GM12878 (cell line): ENCODE measurements at regions of chr10 and their contacts with region 1.

Region 1: DNA sequence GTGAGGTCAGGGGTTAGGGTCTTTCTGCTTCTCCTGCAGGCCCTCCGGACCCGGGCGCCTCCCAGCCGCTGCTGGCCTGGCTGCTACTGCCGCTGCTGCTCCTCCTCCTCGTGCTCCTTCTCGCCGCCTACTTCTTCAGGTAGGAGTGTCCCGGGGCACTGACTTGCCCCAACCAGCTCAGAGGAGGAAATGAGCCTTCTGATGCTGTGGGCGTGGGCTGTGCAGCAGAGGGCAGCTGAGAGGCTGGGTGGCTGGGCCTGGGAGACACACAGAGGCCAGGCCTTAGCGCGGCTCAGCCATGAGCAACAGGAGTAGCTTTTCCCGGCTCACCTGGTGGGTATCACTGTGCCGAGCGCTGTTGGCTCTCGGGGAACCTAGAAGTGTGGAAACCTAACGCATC is 78.9 kb downstream of the MKI67 start:
- DNase-seq: peak; percentile 63
- ATAC-seq: peak; percentile 99
- H3K4me3 ChIP-seq: peak overlapping the region; percentile 70
- H3K27ac ChIP-seq: peak overlapping the region; percentile 54
- H3K4me1 ChIP-seq: peaks cover 30% of the 10 kb centered on the region
- H3K27me3 ChIP-seq: no peaks in the 10 kb centered on the region
- CTCF ChIP-seq: no peak
- EP300 ChIP-seq: no peak
- POLR2A ChIP-seq: peak; percentile 89
- RAD21 ChIP-seq: no peak

Region 2: GRCh38 chr10:127614484-127615017 is 432.8 kb before region 1 on chr10:
- CTCF ChIA-PET with region 1: no interaction called
- POLR2A ChIA-PET with region 1: no interaction called
- RAD21 ChIA-PET with region 1: no interaction called
- SMC1A ChIA-PET with region 1: no interaction called
- in situ Hi-C with region 1: no loop called
- intact Hi-C with region 1: no loop called
- DNase-seq: no peak
- ATAC-seq: no peak
- H3K4me3 ChIP-seq: no peak overlapping the region
- H3K27ac ChIP-seq: no peak overlapping the region
- H3K4me1 ChIP-seq: no peaks in the 10 kb centered on the region
- H3K27me3 ChIP-seq: no peaks in the 10 kb centered on the region
- CTCF ChIP-seq: no peak
- EP300 ChIP-seq: no peak
- POLR2A ChIP-seq: no peak
- RAD21 ChIP-seq: no peak

Region 3: DNA sequence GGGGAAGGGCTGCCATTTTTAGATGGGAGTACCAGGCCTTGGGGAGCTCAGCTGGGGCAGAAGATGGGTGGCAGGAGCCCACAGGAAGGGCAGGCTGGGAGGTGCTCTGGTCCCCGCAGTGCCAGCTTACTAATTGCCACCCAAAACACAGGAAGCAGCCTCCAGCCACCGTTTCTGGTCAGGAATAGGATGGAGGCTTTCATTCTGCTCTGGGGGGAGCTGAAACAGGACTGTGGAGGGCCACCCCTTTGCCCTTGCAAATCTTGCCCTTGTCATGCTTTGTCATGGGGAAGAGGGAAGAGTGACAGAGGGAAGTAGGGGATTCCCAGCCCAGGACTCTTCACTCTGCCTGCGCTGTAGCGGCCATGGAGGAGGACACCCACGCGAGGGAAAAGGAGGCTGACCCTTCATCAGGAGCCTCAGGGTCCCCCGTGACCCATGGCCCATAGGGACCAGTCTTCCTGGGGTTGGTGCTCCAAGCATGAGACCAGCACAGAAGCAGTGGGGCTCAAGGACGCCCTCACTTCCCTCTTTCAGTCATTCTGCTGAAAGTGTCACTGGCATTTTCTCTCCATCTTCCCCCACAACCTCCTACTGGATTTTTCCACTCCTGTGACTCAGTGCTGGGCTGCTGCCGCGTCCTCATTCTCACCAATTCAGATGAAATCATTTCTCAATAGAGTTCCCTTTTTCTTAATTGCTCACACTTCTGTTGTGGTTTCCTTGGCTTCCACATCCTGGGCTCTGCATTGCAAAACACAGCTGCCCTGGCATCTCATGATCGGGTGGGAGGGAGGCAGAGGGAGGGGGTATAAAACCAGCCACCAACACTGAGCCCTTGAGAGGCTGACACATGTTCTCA is 17.0 kb after region 1 on chr10:
- CTCF ChIA-PET with region 1: interaction called, 42 read pairs
- POLR2A ChIA-PET with region 1: interaction called, 117 read pairs
- RAD21 ChIA-PET with region 1: interaction called, 82 read pairs
- SMC1A ChIA-PET with region 1: interaction called, 116 read pairs
- in situ Hi-C with region 1: no loop called
- intact Hi-C with region 1: loop called (anchors 1 kb)
- DNase-seq: peak; percentile 80
- ATAC-seq: peak; percentile 79
- H3K4me3 ChIP-seq: no peak overlapping the region
- H3K27ac ChIP-seq: peak overlapping the region; percentile 76
- H3K4me1 ChIP-seq: peaks cover 36% of the 10 kb centered on the region
- H3K27me3 ChIP-seq: no peaks in the 10 kb centered on the region
- CTCF ChIP-seq: no peak
- EP300 ChIP-seq: peak; percentile 49; a peak in 2 of 4 replicates
- POLR2A ChIP-seq: no peak
- RAD21 ChIP-seq: no peak